Vagina (tissue), 2 donors: ENCODE measurements at regions of chr11 and their contacts with region 1.

Region 1: GRCh38 chr11:111044751-111045406 is 200.6 kb upstream of the POU2AF2 start:
- DNase-seq: no peak
- H3K4me3 ChIP-seq: no peak overlapping the region
- H3K27ac ChIP-seq: peak overlapping the region; percentile 31
- H3K4me1 ChIP-seq: peaks cover 6% of the 10 kb centered on the region
- H3K27me3 ChIP-seq: no peaks in the 10 kb centered on the region
- CTCF ChIP-seq: no peak
- POLR2A ChIP-seq: no peak

Region 2: DNA sequence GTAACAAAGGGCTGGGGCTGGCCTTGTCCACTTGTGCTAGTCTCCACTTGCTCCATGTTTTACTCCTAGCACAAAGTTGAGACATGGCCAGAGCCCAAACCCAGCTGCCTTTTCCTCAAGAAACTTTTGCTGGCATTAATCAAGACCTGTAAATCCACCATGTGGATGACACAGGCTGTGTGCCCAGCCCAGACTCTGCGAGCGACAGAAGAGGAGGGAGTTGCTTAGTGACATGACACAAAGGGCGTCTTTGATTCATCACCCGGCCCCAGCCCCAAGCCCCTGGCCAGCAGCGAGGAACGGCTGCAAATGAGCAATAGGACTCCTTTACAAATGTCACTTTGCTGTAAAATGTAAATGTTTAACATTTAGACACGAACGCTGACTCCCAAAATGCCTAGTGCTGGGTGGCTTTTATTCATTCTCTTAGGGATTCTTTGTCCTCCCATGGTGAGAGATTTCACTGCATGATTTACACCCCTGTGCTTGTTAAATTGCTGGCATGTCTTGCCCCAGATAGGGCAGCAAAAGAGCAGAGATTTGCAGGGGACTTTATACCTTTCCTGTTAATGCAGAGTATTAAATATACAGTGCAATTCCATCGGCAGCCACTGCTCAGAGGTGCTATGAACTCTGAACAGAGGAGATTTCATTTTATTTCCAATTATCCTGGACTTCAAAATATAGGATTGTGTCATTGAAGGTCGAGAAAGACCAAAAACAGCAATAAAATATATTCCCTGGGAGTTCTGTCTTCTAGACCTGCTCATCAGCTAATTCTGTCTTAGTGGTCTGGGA is 1652.7 kb after region 1 on chr11:
- intact Hi-C with region 1: loop called (anchors 5 kb)
- DNase-seq: no peak
- H3K4me3 ChIP-seq: no peak overlapping the region
- H3K27ac ChIP-seq: no peak overlapping the region
- H3K4me1 ChIP-seq: no peaks in the 10 kb centered on the region
- H3K27me3 ChIP-seq: no peaks in the 10 kb centered on the region
- CTCF ChIP-seq: no peak
- POLR2A ChIP-seq: no peak